ENCODE measurements at regions of chr13 and their contacts with region 1.

Region 1: DNA sequence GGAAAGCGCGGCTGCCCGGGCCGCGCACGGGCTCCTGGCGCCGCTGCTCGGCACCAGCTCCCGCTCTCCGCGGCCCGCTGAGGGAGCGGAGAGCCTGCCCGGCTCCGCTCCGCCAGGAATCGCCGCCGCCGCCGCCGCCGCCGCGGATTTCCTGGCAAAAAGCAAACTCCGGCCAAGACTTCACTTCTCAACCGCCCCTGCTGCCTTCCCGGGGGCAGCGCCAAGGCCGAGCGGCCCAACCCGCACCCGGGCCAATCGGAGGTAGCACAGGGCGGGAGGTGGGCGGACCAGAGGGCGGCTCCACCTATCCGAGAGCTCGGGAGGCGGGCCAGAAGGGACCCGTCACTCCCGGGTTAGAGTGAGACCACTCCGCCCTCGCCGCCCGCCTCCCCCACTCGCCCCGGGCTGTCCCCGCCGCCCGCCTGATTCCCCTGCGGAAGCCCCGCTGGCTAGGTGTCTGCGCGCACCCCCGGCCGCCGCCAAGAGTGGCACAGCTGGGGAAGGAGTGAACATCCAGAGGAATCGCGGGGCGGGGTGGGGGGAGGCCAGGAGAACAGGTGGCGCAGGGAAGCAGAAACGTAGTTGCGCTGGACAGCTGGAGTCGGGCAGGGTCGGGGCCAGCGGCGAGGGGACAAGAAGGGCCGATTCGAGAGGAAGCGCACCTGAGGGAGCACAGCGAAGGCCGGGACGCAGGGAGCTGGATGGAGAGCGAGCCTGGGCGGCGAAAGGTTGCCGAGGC is at the start of gene LNX2:
- DNase-seq: peak; percentile 99
- ATAC-seq: peak; percentile 96
- total RNA-seq, gene LNX2: 9.7 TPM

Region 2: GRCh38 chr13:27424246-27425157 is 196.0 kb before region 1 on chr13 and contains the start of gene GTF3A:
- intact Hi-C with region 1: loop called (anchors 10 kb)
- DNase-seq: peak; percentile 91
- ATAC-seq: peak; percentile 97
- total RNA-seq, gene GTF3A: 211 TPM

Measured in Right ventricle myocardium superior (tissue), 1 donor.